PC-9 (cell line): ENCODE measurements at regions of chr11 and their contacts with region 1.

Region 1: DNA sequence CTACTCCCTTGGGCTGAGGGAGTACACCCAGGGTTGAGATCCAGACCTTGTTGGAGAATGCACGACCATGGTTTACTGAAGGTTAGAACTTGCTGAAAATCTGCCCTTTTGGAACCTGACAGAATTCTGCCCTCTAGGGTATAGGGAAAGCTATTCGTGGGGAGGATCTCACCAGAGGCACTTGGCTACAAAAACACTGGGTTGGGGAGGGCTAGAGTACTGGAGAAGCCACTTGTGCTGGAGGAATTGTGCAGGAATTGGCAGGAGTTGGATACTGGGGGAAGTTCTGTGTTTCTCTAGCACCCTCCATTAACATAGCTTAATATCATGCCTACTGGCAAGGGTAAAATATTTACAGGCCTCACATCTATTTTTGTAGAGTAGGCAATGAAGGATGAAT is 55.8 kb downstream of the PPME1 start:
- DNase-seq: no peak
- H3K4me3 ChIP-seq: no peak overlapping the region
- H3K27ac ChIP-seq: no peak overlapping the region
- H3K4me1 ChIP-seq: no peaks in the 10 kb centered on the region
- H3K27me3 ChIP-seq: no peaks in the 10 kb centered on the region
- CTCF ChIP-seq: no peak

Region 2: DNA sequence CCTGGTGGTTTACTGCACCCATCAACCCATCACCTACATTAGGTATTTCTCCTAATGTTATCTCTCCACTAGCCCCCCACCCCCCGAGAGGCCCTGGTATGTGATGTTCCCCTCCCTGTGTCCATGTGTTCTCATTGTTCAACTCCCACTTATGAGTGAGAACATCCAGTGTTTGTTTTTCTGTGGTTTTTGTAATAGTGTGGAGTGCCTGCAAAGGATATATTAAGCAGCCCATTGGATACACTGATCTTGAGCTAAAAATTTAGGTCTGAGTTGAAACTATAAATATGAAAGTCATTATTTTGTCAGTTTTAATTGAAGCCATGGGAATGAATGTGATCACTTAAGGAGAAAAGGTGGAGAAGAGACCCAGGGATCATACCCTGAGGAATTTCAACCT is 416.3 kb before region 1 on chr11:
- CTCF ChIA-PET with region 1: no interaction called
- POLR2A ChIA-PET with region 1: interaction called, 13 read pairs
- intact Hi-C with region 1: no loop called
- DNase-seq: no peak
- H3K4me3 ChIP-seq: no peak overlapping the region
- H3K27ac ChIP-seq: no peak overlapping the region
- H3K4me1 ChIP-seq: no peaks in the 10 kb centered on the region
- H3K27me3 ChIP-seq: no peaks in the 10 kb centered on the region
- CTCF ChIP-seq: no peak

Region 3: GRCh38 chr11:74278721-74279161 is 51.8 kb after region 1 on chr11:
- CTCF ChIA-PET with region 1: no interaction called
- POLR2A ChIA-PET with region 1: no interaction called
- intact Hi-C with region 1: no loop called
- DNase-seq: peak; percentile 25 to 76
- H3K4me3 ChIP-seq: no peak overlapping the region
- H3K27ac ChIP-seq: peak overlapping the region; percentile 27
- H3K4me1 ChIP-seq: peaks cover 21% of the 10 kb centered on the region
- H3K27me3 ChIP-seq: no peaks in the 10 kb centered on the region
- CTCF ChIP-seq: no peak